PC-3 (cell line): ENCODE measurements at regions of chr2 and their contacts with region 1.

Region 1: DNA sequence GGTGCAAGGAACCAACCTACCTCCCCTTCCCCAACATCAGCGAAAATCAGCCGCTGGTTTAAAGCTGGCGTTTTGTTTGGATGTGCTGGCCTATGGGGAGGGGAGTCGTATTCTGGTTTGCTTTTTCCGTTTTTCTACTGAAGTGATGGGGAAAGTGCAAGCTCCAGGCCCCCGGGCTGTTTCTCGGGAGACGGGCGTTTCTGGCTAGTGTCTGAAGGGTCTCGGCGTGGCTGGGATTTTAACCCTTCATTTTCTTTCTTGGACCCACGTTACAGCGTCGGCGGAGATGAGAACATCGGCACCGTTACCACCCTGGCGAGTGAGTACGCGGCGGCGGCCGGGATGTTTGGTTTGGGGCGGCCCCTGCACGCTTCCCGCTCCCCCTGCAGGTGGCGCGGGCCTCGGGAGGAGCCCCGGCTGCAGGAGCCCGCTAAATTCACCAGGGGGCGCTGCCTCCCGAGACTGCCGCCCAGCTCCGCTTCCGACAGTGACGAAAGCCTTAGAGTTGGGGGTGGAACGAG is 70.7 kb downstream of the PLB1 start:
- DNase-seq: peak; percentile 87
- ATAC-seq: peak; percentile 88
- H3K4me3 ChIP-seq: peak overlapping the region; percentile 76
- H3K27ac ChIP-seq: peak overlapping the region; percentile 64; the same call in 1 of the 2 replicates
- H3K4me1 ChIP-seq: peaks cover 25% of the 10 kb centered on the region
- H3K27me3 ChIP-seq: no peaks in the 10 kb centered on the region
- CTCF ChIP-seq: peak; percentile 98

Region 2: DNA sequence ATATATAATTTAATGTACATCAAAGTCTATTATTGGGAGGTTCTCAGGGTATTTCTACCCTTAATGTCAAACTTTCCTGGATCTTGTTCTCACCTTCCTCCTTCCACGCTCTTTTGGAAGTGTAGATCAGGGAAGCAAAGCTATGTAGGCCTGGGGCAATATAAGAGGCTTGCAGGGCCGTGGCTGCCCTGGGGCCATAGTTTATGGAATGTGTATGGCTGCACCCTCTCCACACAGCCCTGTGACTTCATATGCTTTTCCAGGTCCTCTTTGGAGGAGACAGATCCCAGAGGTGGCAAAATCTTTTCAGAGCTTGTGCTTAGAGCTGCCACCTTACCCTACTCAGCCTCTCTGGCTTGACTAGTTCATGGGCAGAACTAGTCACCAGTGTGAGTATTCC is 12.2 kb after region 1 on chr2:
- CTCF ChIA-PET with region 1: interaction called, 8 read pairs
- POLR2A ChIA-PET with region 1: interaction called, 16 read pairs
- intact Hi-C with region 1: no loop called
- DNase-seq: no peak
- ATAC-seq: no peak
- H3K4me3 ChIP-seq: no peak overlapping the region
- H3K27ac ChIP-seq: no peak overlapping the region
- H3K4me1 ChIP-seq: peaks cover 23% of the 10 kb centered on the region
- H3K27me3 ChIP-seq: no peaks in the 10 kb centered on the region
- CTCF ChIP-seq: no peak

Region 3: DNA sequence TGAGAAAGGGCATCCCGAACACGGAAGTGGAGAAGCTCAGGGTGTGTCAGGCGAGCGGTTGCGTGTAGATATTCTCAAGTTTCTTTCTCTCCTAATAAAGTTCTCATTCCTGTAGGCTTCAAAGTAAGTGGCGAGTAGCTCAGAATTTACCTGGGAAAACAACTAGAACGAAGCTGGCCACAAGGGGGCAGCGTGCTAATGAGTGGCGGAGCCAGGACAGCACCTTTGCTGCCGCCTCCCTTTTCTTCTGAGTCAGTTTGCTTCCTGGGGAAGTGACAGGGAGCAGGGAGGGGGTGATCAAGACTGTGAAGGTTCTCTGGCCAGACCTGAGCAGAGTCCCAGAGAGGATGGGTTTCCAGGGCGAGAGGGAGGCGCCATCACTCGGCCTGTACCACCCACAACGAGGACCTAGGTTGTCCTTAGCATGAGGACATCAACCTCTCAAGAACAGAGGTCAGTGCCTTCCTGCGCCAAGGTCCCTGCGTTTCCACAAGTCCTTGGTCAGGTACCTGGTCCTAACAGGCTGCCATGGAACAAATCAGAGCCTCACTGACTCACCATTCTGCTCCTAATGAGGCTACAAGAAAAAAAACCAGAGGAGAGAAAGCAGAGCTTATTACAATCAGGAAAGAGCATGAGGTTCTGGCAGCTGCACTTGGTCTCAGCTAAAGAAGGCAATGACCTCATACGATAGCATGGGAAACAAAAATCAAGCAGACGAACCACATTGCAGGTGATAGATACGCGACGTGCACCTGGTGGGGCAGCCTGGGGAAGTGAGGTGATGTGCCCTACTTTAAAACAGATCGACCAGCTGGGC is 27.9 kb after region 1 on chr2:
- CTCF ChIA-PET with region 1: interaction called, 30 read pairs
- POLR2A ChIA-PET with region 1: no interaction called
- intact Hi-C with region 1: loop called (anchors 1 kb)
- DNase-seq: peak; percentile 99
- ATAC-seq: peak; percentile 96
- H3K4me3 ChIP-seq: no peak overlapping the region
- H3K27ac ChIP-seq: peak overlapping the region; percentile 81
- H3K4me1 ChIP-seq: peaks cover 30% of the 10 kb centered on the region
- H3K27me3 ChIP-seq: no peaks in the 10 kb centered on the region
- CTCF ChIP-seq: peak; percentile 91

Region 4: GRCh38 chr2:28643911-28644334 is 77.3 kb after region 1 on chr2:
- CTCF ChIA-PET with region 1: no interaction called
- POLR2A ChIA-PET with region 1: interaction called, 23 read pairs
- intact Hi-C with region 1: no loop called
- DNase-seq: peak; percentile 96
- ATAC-seq: peak; percentile 92
- H3K4me3 ChIP-seq: peak overlapping the region; percentile 28; the same call in 1 of the 2 replicates
- H3K27ac ChIP-seq: peak overlapping the region; percentile 96
- H3K4me1 ChIP-seq: peaks cover 68% of the 10 kb centered on the region
- H3K27me3 ChIP-seq: no peaks in the 10 kb centered on the region
- CTCF ChIP-seq: no peak

Region 5: DNA sequence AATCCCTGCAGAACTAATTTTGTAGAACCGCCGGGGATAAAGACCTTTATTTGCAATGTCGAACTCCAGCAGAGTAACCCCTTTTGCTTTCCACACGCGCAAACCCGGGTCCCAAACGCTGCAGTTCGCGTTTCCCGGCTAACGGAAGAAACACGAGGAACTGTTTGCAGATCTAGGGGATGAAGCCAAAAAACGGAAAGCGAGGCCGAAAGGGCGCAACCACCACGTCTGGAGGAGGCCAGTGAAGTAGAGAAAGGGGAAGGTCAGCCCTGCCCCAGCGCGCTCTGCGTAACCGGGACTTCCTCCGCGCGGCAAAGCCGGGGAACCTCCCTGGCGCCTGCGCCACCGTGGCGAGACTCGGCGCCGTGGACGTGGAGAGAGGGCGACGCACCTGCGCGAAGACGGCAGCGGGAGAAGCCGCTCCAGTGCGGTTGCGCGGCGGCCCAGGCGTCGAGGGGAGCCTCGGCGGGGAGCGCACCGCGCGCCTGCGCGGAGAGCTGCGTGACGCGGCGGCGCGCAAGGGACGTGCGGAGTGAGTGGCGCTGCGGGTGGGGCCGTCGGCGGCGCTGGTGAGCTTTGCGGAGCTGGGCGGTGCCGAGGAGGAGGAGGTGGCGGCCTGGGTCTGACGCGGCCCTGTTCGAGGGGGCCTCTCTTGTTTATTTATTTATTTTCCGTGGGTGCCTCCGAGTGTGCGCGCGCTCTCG is 184.8 kb after region 1 on chr2 and contains the start of gene PPP1CB:
- CTCF ChIA-PET with region 1: interaction called, 9 read pairs
- POLR2A ChIA-PET with region 1: no interaction called
- intact Hi-C with region 1: loop called (anchors 1 kb)
- DNase-seq: peak; percentile 97
- ATAC-seq: peak; percentile 85
- H3K4me3 ChIP-seq: peak within 1 kb of the TSS; percentile 88
- H3K27ac ChIP-seq: peak within 1 kb of the TSS; percentile 91
- H3K4me1 ChIP-seq: peaks cover 42% of the 10 kb centered on the region
- H3K27me3 ChIP-seq: no peaks in the 10 kb centered on the region
- CTCF ChIP-seq: peak; percentile 23; the same call in 1 of the 2 replicates
- total RNA-seq, gene PPP1CB: 84.2 and 101 TPM in 2 replicates